ENCODE measurements at regions of chr1 and their contacts with region 1.

Region 1: GRCh38 chr1:150149271-150150132 is at the start of gene PLEKHO1:
- DNase-seq: peak; percentile 88
- H3K4me3 ChIP-seq: peak within 1 kb of the TSS; percentile 89 to 96 (median 95)
- H3K27ac ChIP-seq: peak within 1 kb of the TSS; percentile 87
- H3K4me1 ChIP-seq: peaks cover 42% of the 10 kb centered on the region
- H3K27me3 ChIP-seq: no peaks in the 10 kb centered on the region
- CTCF ChIP-seq: no peak
- POLR2A ChIP-seq: peak; percentile 8
- total RNA-seq, gene PLEKHO1: 101 and 121 TPM in 2 replicates

Region 2: DNA sequence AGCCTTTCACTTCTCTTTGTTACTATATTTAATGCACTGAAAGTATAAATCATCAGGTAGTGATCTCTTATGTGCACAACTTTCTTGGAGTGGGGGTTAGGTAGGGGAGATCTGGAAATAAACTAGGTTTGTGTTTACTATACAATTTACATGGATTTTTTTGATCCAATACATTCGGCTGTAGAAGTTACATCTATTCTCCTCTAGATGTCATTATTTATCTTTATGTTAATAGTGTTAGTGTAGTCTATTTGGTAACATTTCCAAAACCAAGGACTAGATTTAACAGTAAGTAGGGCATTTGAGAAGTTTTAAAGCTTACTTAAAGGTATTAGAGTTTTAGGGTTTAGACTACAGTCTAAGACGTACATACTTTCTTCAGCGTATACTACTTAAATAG is 76.5 kb before region 1 on chr1:
- CTCF ChIA-PET with region 1: interaction called, 11 read pairs
- POLR2A ChIA-PET with region 1: no interaction called
- dilution Hi-C with region 1: no loop called
- intact Hi-C with region 1: no loop called
- DNase-seq: peak; percentile 40
- H3K4me3 ChIP-seq: no peak overlapping the region
- H3K27ac ChIP-seq: no peak overlapping the region
- H3K4me1 ChIP-seq: peaks cover 7% of the 10 kb centered on the region
- H3K27me3 ChIP-seq: no peaks in the 10 kb centered on the region
- CTCF ChIP-seq: peak in 1 of 2 donors; percentile 20
- POLR2A ChIP-seq: no peak

Region 3: GRCh38 chr1:150110116-150110515 is 39.4 kb before region 1 on chr1:
- CTCF ChIA-PET with region 1: no interaction called
- POLR2A ChIA-PET with region 1: no interaction called
- dilution Hi-C with region 1: no loop called
- intact Hi-C with region 1: loop called (anchors 5 kb)
- DNase-seq: peak; percentile 66
- H3K4me3 ChIP-seq: no peak overlapping the region
- H3K27ac ChIP-seq: peak overlapping the region; percentile 18
- H3K4me1 ChIP-seq: peaks cover 17% of the 10 kb centered on the region
- H3K27me3 ChIP-seq: no peaks in the 10 kb centered on the region
- CTCF ChIP-seq: no peak
- POLR2A ChIP-seq: no peak

Region 4: DNA sequence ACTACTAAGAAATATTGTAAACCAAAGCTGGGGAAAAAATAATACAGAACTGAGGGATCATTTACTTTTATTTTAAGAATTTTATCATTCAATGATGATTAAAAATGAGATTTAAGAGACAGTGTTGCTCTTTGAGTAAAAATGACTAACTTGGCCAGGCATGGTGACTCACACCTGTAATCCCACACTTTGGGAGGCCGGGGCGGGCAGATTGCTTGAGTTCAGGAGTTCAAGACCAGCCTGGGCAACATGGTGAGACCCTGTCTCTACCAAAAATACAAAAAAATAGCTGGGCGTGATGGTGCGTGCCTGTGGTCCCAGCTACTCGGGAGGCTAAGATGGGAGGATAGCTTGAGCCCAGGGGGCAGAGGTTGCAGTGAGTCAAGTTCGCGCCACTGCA is 21.6 kb before region 1 on chr1:
- CTCF ChIA-PET with region 1: no interaction called
- POLR2A ChIA-PET with region 1: no interaction called
- dilution Hi-C with region 1: no loop called
- intact Hi-C with region 1: no loop called
- DNase-seq: no peak
- H3K4me3 ChIP-seq: no peak overlapping the region
- H3K27ac ChIP-seq: no peak overlapping the region
- H3K4me1 ChIP-seq: no peaks in the 10 kb centered on the region
- H3K27me3 ChIP-seq: no peaks in the 10 kb centered on the region
- CTCF ChIP-seq: no peak
- POLR2A ChIP-seq: no peak

Region 5: GRCh38 chr1:150162862-150163706 is 13.6 kb after region 1 on chr1:
- CTCF ChIA-PET with region 1: interaction called, 34 read pairs
- POLR2A ChIA-PET with region 1: interaction called, 11 read pairs
- dilution Hi-C with region 1: no loop called
- intact Hi-C with region 1: loop called (anchors 1 kb)
- DNase-seq: peak; percentile 93
- H3K4me3 ChIP-seq: no peak overlapping the region
- H3K27ac ChIP-seq: peak overlapping the region; percentile 75
- H3K4me1 ChIP-seq: peaks cover 41% of the 10 kb centered on the region
- H3K27me3 ChIP-seq: no peaks in the 10 kb centered on the region
- CTCF ChIP-seq: no peak
- POLR2A ChIP-seq: peak; percentile 25

Region 6: DNA sequence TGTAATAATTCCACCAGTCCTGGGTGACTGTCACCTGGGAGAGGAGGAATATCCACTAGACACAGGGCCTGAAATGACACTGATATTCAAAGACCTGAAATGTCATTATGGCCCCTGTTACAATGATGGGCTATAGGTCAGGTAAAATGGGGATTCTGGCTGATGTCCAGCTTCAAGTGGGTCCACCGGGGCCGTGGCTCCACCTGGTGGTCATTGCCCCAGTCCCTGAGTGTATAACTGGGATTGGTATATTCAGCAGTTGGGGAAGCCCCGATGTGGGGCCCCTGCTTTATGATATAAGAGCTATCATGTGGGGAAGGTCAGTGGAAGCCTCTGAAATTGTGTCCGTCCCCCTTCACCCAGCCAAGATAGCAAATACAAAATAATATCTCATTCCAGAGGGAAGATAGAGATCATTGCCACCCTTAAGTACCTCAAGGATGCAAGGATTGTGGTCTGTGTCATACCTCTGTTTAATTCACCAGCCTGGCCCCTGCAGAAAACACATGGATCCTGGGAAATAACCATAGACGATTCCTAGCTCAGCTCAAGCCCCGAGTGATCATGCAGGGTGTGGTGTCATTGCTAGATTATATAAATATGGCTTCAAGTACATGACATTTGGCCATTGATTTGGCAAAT is 19.6 kb after region 1 on chr1:
- CTCF ChIA-PET with region 1: interaction called, 34 read pairs
- POLR2A ChIA-PET with region 1: no interaction called
- dilution Hi-C with region 1: no loop called
- intact Hi-C with region 1: no loop called
- DNase-seq: peak; percentile 64
- H3K4me3 ChIP-seq: no peak overlapping the region
- H3K27ac ChIP-seq: no peak overlapping the region
- H3K4me1 ChIP-seq: no peaks in the 10 kb centered on the region
- H3K27me3 ChIP-seq: no peaks in the 10 kb centered on the region
- CTCF ChIP-seq: peak; percentile 83 to 85
- POLR2A ChIP-seq: no peak